ENCODE measurements at regions of chr15 and their contacts with region 1.

Region 1: DNA sequence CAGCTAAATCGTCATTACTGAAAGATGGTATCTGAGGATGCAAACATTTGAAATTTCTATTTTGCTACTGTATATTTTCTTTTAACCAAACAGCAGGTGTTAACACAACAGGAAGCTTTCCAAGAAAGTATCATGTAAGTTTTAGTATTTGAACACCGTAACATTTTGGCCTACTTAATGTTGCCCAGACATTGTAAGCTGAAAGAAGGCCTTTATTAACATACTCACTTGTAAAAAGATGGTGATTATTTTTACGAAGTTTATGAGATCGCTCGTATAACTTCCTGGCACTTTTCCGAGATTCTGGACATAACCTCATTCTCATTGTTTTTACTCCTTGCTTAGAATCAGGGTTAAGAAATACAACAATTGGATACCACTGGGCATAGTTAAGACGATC is 95.7 kb downstream of the TJP1 start:
- DNase-seq: no peak
- H3K4me3 ChIP-seq: no peak overlapping the region
- H3K27me3 ChIP-seq: no peaks in the 10 kb centered on the region
- CTCF ChIP-seq: no peak

Region 2: DNA sequence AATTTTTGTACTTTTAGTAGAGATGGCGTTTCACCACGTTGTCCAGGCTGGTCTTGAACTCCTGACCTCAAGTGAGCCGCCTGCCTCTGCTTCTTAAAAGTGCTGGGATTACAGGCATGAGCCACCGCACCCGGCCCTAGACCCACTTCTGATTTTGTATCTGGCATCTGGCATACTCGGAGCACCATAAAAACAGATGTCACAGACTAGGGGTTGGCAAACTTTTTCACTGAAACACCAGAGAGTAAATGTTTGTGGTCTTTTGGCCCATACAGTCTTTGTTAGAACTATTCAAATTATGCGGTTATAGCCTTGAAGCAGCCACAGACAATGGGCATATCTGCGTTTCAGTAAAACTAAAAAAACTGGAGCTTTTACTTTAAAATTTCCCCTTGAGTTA is 15.0 kb before region 1 on chr15:
- CTCF ChIA-PET with region 1: interaction called, 13 read pairs
- POLR2A ChIA-PET with region 1: interaction called, 3 read pairs
- DNase-seq: no peak
- H3K4me3 ChIP-seq: no peak overlapping the region
- H3K27me3 ChIP-seq: no peaks in the 10 kb centered on the region
- CTCF ChIP-seq: no peak